HCT116 (cell line): ENCODE measurements at regions of chr14 and their contacts with region 1.

Region 1: DNA sequence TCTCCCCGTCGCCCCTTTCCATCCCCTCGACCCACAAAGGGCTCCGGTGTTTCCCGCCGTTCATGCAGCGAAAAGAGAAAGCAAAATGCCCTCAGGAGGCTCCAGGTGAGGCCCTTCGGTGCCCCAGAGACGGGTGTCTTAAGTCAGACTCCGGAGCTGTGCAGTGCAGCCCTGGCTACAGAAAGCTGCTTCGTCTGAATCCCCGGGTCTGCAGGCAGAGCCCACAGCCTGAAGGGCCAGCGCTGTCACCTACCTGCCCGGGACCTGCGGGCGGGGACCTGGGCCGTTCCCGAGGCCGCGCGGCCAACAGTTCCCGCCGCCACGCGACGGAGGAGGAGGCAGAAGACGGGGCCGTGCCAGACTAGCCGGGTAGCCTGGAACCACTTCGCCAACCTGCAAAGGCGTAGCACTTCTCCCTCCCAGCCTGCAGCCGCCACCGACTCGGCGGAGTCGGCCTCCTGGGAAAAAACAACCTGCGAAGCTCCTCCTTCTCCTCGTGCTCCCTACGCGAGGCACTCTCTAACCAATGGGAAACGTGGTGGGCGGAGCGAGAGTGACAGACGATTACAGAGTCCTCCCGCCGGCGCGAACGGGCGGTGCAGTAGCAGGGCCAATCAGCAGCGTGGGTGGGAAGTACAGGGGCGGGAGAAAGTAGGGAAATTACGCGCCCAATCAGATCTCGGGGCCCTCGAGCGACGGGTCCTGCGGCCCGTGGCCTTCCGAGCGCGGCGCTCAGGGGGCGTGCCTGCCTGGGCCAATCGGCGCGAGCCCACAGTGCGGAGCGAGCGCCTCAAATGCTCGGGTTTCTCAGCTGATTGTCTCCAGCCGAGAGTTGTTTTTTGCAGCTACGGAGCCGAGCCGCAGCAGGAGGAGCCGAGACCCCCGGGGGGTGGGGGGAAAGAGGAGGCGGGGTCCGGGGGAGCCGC is at the starts of genes GPR137C and TXNDC16:
- DNase-seq: peak; percentile 98
- ATAC-seq: peak; percentile 95
- H3K4me3 ChIP-seq: peak within 1 kb of the TSS; percentile 63 to 73
- H3K27ac ChIP-seq: peak within 1 kb of the TSS; percentile 41; the same call in 1 of the 2 replicates
- H3K4me1 ChIP-seq: peaks cover 6 to 23% of the 10 kb centered on the region in 2 experiments
- H3K27me3 ChIP-seq: no peaks in the 10 kb centered on the region
- CTCF ChIP-seq: no peak
- POLR2A ChIP-seq: no peak
- RAD21 ChIP-seq: no peak
- total RNA-seq, gene GPR137C: 0.89 TPM
- total RNA-seq, gene TXNDC16: 2.7 TPM

Region 2: DNA sequence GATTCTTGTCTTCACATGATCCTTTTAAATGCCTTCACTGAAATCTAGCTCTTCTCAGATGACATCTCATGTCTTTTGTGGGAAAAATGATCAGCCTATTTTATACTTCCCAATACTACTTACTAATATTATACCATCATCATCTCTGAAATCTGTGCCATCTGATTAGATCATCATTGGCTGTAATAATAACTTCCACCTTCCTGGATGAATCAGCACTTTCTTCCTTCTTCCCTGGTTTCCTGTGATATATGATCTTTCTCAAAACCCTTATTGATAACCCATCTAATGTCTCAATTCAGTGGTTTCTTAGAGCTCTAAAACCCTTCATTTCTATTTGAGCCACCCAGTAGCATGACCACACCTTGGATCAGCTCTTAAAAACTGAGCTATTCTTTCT is 31.2 kb after region 1 on chr14:
- CTCF ChIA-PET with region 1: no interaction called
- POLR2A ChIA-PET with region 1: no interaction called
- RAD21 ChIA-PET with region 1: no interaction called
- intact Hi-C with region 1: no loop called
- DNase-seq: no peak
- ATAC-seq: no peak
- H3K4me3 ChIP-seq: no peak overlapping the region
- H3K27ac ChIP-seq: no peak overlapping the region
- H3K4me1 ChIP-seq: peaks cover 0 to 7% of the 10 kb centered on the region in 2 experiments; a peak in 1 of 4 replicates
- H3K27me3 ChIP-seq: no peaks in the 10 kb centered on the region
- CTCF ChIP-seq: no peak
- POLR2A ChIP-seq: no peak
- RAD21 ChIP-seq: no peak

Region 3: DNA sequence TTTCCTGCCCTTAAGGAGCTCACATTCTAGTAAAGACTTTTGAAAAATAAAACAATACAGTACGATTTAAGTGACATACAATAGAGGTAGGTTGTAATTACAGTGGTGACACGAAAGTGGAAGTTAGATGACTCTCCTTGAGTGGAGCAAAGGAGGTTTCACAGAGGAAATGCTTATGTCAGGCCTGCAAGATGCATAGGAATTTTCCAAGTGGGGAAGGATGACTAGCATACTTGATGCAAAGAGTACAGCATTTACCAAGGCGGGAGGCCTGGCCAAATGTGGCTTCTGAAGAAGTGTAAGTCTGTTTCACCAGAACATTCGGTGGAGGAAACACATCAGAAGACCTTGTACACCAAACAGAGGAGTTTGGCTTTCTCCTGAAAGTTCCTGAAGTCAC is 87.8 kb after region 1 on chr14:
- CTCF ChIA-PET with region 1: no interaction called
- POLR2A ChIA-PET with region 1: no interaction called
- RAD21 ChIA-PET with region 1: no interaction called
- intact Hi-C with region 1: no loop called
- DNase-seq: no peak
- ATAC-seq: no peak
- H3K4me3 ChIP-seq: no peak overlapping the region
- H3K27ac ChIP-seq: no peak overlapping the region
- H3K4me1 ChIP-seq: no peaks in the 10 kb centered on the region
- H3K27me3 ChIP-seq: no peaks in the 10 kb centered on the region
- CTCF ChIP-seq: no peak
- POLR2A ChIP-seq: no peak
- RAD21 ChIP-seq: no peak

Region 4: DNA sequence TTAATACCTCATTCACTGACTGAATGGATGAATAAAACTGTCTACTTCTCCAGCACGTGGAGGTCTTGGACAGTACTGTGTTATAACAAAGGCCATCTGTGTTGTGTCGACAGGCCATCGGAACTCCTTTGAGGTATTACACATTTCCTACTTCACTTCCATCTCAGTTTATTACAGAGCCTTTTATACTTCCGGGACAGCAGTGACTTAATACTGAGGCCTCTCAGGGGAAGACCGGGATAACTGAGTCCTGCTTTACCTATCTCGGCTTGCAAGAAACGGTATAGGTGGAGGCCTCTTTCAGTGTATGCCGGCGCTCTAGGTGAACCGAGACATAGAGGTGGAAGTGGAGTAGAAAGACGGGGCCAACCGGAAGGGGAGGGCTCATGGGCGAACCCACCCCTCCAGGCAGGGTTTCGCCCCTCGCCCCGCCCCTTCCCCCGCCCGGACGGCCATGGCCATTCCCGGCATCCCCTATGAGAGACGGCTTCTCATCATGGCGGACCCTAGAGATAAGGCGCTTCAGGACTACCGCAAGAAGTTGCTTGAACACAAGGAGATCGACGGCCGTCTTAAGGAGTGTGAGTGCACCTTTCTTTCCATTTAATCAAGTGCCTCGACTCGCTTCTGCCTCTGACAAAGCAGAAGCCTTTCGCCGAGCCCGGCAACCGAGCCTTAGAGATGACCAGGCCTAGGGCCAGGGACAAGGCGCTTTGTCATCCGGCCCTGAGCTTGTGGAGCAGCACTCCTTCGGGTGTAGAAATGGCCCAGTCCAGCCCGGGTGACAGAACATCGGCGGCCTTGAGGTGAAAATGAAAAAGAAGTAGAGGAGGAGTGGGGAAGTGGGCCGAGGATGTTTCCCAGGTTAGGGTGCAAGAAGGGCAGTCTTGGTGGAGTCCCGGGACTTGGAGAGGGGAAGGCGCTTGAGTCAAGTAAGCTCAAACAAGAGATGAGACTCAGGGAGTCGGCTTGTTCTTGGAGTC is 154.7 kb after region 1 on chr14 and contains the start of gene PSMC6:
- CTCF ChIA-PET with region 1: no interaction called
- POLR2A ChIA-PET with region 1: interaction called, 4 read pairs
- RAD21 ChIA-PET with region 1: no interaction called
- intact Hi-C with region 1: loop called (anchors 10 kb)
- DNase-seq: peak; percentile 78
- ATAC-seq: peak; percentile 96
- H3K4me3 ChIP-seq: peak within 1 kb of the TSS; percentile 94 to 96
- H3K27ac ChIP-seq: peak within 1 kb of the TSS; percentile 87
- H3K4me1 ChIP-seq: peaks cover 10 to 24% of the 10 kb centered on the region in 2 experiments
- H3K27me3 ChIP-seq: no peaks in the 10 kb centered on the region
- CTCF ChIP-seq: no peak
- POLR2A ChIP-seq: peak; percentile 95
- RAD21 ChIP-seq: peak; percentile 12; the same call in 1 of the 2 replicates
- total RNA-seq, gene PSMC6: 71.7 TPM

Region 5: GRCh38 chr14:52791203-52792096 is 239.1 kb after region 1 on chr14 and contains the start of gene GNPNAT1:
- CTCF ChIA-PET with region 1: no interaction called
- POLR2A ChIA-PET with region 1: no interaction called
- RAD21 ChIA-PET with region 1: interaction called in 1 of 2 experiments, 3 read pairs
- intact Hi-C with region 1: loop called (anchors 5 kb)
- DNase-seq: peak; percentile 86
- ATAC-seq: peak; percentile 96
- H3K4me3 ChIP-seq: peak within 1 kb of the TSS; percentile 86 to 91
- H3K27ac ChIP-seq: peak within 1 kb of the TSS; percentile 66
- H3K4me1 ChIP-seq: peaks cover 9 to 21% of the 10 kb centered on the region in 2 experiments; a peak in 3 of 4 replicates
- H3K27me3 ChIP-seq: no peaks in the 10 kb centered on the region
- CTCF ChIP-seq: no peak
- POLR2A ChIP-seq: peak; percentile 34
- RAD21 ChIP-seq: no peak
- total RNA-seq, gene GNPNAT1: 33.7 TPM